Activated CD8-positive, alpha-beta T cell treated with anti-CD3 and anti-CD28 coated beads, Interleukin-2, amount 10 ng/mL, durations not matched to agents 7 days and 5 days (primary cell): ENCODE measurements at regions of chr15 and their contacts with region 1.

Region 1: GRCh38 chr15:68795298-68795848 is 25.3 kb downstream of the ANP32A start:
- DNase-seq: peak; percentile 79
- ATAC-seq: peak; percentile 63
- H3K4me3 Mint-ChIP-seq: peak overlapping the region; percentile 35
- H3K27ac Mint-ChIP-seq: peak overlapping the region; percentile 48
- H3K4me1 Mint-ChIP-seq: peaks cover 98% of the 10 kb centered on the region
- H3K27me3 Mint-ChIP-seq: no peaks in the 10 kb centered on the region

Region 2: DNA sequence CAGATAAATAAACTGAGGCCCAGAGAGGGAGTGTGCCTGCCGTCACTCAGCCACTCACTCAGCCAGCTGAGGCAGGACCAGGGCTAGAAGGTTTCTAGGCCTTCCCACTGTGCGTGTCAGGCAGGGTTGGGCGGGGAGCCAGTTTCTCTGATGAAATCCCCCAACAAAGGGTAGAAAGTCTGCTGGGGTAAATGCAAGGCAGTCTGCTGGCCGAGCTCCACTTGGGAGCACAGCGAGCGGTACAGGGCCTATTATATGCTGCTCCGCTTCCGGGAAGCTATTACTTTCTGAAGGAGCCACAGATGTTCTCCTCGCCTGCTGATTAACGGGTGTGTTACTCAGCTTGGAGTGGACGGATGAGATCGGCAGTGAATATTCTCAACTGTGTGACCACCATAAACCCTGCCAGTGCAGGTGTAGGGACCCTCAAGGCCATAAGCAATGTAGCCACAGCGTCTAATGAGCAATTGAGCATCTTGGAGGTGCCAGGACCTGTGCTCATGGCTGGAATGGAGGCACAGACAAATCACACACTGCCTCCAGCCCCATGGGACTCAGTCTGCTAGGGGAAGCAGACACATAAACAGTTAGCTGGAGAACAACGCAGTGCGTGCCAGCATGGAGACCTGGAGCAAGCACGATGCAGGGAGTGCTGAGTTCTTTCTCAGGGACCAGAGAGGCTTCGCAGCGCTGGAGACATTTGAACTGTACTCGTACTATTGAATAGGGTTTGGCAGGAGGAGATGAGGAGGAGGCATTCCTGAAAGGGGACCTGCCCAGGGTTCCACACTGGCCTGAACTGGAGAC is 174.4 kb before region 1 on chr15:
- CTCF ChIA-PET with region 1: no interaction called
- POLR2A ChIA-PET with region 1: no interaction called
- DNase-seq: no peak
- ATAC-seq: no peak
- H3K4me3 Mint-ChIP-seq: no peak overlapping the region
- H3K27ac Mint-ChIP-seq: no peak overlapping the region
- H3K4me1 Mint-ChIP-seq: no peaks in the 10 kb centered on the region
- H3K27me3 Mint-ChIP-seq: peaks cover 19% of the 10 kb centered on the region

Region 3: DNA sequence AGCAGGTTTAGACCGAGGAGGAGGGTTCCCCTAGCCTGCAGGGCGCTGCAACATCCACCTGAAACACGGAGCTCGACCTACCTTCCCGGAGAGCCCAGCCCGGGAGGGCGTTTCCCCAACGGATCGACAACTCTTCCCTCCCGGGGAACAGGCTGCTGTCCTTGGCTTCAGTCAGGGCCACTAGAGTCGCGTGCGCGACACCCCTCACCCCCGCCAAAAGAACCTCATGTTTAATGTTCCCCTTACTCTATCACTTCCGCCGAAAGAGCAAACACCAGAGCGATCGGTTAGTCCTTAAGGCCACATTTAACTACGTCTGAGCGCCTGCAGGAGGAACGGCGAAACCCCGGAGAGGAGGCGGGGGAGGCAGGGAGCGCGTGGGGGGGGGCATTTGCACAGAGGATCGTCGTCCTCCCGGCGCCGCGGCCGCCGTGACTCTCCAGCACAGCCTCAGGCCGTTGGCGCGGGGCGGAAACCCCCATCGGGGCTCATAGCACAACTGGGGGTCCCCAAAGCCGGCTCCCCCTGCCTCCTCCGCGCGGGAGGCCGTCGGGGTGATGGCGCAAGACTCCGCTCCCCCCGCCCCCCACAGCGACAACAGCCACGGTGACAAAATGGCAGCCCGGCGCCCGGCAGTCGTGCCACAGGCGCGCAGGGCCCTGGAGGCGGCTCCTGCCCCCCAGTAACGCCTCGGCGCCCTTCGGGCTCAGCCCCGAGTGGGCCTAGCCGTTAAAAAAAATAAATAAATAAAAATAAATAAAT is 22.1 kb after region 1 on chr15:
- CTCF ChIA-PET with region 1: interaction called, 8 read pairs
- POLR2A ChIA-PET with region 1: interaction called, 61 read pairs
- DNase-seq: peak; percentile 78
- ATAC-seq: peak; percentile 42
- H3K4me3 Mint-ChIP-seq: peak overlapping the region; percentile 100
- H3K27ac Mint-ChIP-seq: peak overlapping the region; percentile 95
- H3K4me1 Mint-ChIP-seq: peaks cover 42% of the 10 kb centered on the region
- H3K27me3 Mint-ChIP-seq: no peaks in the 10 kb centered on the region

Region 4: DNA sequence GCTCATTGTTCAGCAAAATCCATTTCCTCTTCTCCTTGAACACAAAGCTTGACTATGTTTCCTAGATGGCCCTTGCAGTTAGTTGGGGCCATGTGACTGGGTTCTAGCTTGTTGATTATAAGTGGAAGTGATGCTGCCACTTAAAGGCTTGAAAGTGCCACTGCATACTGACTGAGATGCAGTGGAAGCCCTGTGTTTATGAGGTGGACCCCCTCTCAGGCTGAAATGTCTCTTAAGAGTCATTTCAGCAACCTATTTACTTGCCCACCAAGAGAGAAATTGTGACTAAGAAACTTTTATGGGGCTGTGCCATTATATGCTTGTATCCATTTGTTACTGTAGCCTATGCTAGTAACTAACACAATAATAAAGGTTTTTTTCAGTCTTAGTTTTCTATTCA is 33.7 kb after region 1 on chr15:
- CTCF ChIA-PET with region 1: interaction called, 17 read pairs
- POLR2A ChIA-PET with region 1: no interaction called
- DNase-seq: peak; percentile 47
- ATAC-seq: peak; percentile 69
- H3K4me3 Mint-ChIP-seq: no peak overlapping the region
- H3K27ac Mint-ChIP-seq: no peak overlapping the region
- H3K4me1 Mint-ChIP-seq: peaks cover 21% of the 10 kb centered on the region
- H3K27me3 Mint-ChIP-seq: peaks cover 10% of the 10 kb centered on the region